ENCODE measurements at regions of chr12 and their contacts with region 1.

Region 1: DNA sequence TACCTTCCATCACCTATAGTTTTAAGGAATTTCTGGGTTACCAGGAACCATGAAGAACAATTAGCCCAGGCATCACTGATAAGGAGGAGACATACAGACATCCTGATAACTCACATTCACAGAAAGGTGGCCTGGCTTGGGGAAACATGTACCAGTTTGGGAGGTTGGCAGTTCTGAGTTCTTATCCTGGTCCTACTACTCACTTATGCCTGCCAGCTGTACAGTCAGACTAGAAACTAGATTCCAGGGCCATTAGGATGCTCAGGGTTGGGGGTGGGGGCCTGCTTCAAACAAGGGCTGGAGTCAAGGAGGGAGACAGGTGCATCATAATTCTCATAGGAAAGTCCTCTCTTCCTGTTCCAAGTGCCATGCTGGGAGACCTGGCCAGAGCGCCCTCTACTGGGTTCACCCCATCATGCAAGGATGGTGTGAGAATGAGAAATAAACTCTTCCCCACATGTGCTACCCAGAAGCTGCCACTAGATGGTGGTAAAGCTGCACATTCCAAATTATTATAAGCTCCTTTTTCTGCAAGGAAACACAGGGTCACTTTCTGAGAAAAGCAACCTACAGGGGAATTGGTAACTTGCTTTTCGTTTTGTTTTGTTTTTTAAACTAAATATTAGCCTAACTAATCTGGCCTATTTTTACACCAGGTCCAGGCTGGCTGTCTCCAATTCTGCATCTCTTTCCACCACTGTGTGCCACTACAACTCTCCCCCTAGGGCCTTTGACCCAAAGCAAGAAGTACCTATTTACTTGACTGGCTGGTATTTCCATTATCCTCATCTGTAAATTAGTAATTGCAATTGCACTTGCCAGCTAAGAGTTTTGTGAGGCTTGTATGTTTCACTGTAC is 14.5 kb downstream of the OAS2 start:
- DNase-seq: peak; percentile 78
- H3K4me3 Mint-ChIP-seq: no peak overlapping the region
- H3K27ac Mint-ChIP-seq: no peak overlapping the region
- H3K4me1 Mint-ChIP-seq: no peaks in the 10 kb centered on the region
- H3K27me3 Mint-ChIP-seq: no peaks in the 10 kb centered on the region
- CTCF ChIP-seq: peak; percentile 95

Region 2: GRCh38 chr12:112676526-112676925 is 316.2 kb before region 1 on chr12:
- CTCF ChIA-PET with region 1: no interaction called
- POLR2A ChIA-PET with region 1: no interaction called
- intact Hi-C with region 1: no loop called
- DNase-seq: no peak
- H3K4me3 Mint-ChIP-seq: no peak overlapping the region
- H3K27ac Mint-ChIP-seq: no peak overlapping the region
- H3K4me1 Mint-ChIP-seq: no peaks in the 10 kb centered on the region
- H3K27me3 Mint-ChIP-seq: peaks cover 86% of the 10 kb centered on the region
- CTCF ChIP-seq: no peak

Region 3: DNA sequence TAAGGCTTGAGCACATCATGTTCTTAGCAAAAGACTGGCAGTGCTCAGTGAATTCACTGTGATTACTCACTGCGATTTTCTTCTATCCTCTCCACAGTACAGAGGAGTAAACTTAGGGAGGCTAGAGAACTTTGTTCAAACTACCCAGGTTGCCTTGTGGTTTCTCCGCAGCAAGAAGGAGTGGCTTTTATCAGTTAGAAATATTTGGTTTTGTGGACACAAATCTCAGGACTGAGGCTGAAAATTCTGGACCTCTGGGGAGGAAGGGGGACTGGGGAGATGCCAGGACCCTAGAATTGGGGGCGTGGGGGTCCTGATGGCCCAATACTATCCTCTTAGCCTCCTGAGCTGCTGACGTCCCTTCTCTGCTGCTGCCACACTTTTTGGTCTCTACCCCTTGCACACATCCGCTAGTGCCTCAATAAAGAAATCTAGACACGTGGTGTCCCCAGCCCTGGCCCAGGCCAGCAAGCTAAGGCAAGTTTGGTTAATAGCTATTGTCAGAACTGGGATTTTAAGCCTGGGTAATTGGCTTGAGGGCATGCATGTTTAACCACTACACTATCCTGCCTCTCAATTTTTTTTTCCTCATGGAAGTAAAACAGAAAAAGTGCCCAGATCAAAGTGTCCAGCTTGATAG is 13.6 kb before region 1 on chr12:
- CTCF ChIA-PET with region 1: interaction called, 10 read pairs
- POLR2A ChIA-PET with region 1: interaction called, 3 read pairs
- intact Hi-C with region 1: no loop called
- DNase-seq: no peak
- H3K4me3 Mint-ChIP-seq: no peak overlapping the region
- H3K27ac Mint-ChIP-seq: no peak overlapping the region
- H3K4me1 Mint-ChIP-seq: no peaks in the 10 kb centered on the region
- H3K27me3 Mint-ChIP-seq: no peaks in the 10 kb centered on the region
- CTCF ChIP-seq: no peak

Region 4: GRCh38 chr12:113019041-113019440 is 26.3 kb after region 1 on chr12:
- CTCF ChIA-PET with region 1: interaction called, 35 read pairs
- POLR2A ChIA-PET with region 1: interaction called, 3 read pairs
- intact Hi-C with region 1: no loop called
- DNase-seq: peak; percentile 39
- H3K4me3 Mint-ChIP-seq: no peak overlapping the region
- H3K27ac Mint-ChIP-seq: no peak overlapping the region
- H3K4me1 Mint-ChIP-seq: peaks cover 17% of the 10 kb centered on the region
- H3K27me3 Mint-ChIP-seq: no peaks in the 10 kb centered on the region
- CTCF ChIP-seq: no peak

Region 5: GRCh38 chr12:113098446-113098896 is 105.7 kb after region 1 on chr12:
- CTCF ChIA-PET with region 1: interaction called, 13 read pairs
- POLR2A ChIA-PET with region 1: interaction called, 3 read pairs
- intact Hi-C with region 1: loop called (anchors 1 kb)
- DNase-seq: peak; percentile 97
- H3K4me3 Mint-ChIP-seq: peak overlapping the region; percentile 10
- H3K27ac Mint-ChIP-seq: no peak overlapping the region
- H3K4me1 Mint-ChIP-seq: no peaks in the 10 kb centered on the region
- H3K27me3 Mint-ChIP-seq: no peaks in the 10 kb centered on the region
- CTCF ChIP-seq: peak; percentile 90

Region 6: DNA sequence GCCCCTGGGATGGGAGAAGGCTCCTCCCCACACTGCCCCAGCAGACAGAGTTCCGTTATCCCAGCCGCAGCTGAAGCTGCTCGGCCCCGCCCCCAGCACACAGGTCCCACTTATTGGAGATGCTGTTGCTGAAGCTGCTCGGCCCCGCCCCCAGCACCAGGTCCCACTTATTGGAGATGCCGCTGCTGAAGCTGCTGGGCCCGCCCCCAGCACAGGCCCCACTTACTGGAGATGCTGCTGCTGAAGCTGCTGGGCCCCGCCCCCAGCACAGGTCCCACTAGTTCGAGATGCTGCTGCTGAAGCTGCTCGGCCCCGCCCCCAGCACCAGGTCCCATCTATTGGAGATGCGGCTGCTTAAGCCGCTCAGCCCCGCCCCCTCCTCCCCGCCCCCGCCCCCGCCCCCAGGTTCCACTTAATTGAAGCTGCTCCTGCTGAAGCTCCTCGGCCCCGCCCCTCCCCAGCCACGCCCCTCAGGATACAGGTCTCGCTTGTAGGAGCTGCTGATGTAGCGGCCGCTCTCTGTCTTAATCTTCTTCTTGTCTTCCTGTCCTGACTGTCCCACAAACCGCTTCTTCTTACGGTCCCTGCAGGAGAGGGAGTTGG is 168.7 kb after region 1 on chr12:
- CTCF ChIA-PET with region 1: interaction called, 17 read pairs
- POLR2A ChIA-PET with region 1: interaction called, 4 read pairs
- intact Hi-C with region 1: no loop called
- DNase-seq: peak; percentile 21
- H3K4me3 Mint-ChIP-seq: no peak overlapping the region
- H3K27ac Mint-ChIP-seq: no peak overlapping the region
- H3K4me1 Mint-ChIP-seq: peaks cover 11% of the 10 kb centered on the region
- H3K27me3 Mint-ChIP-seq: no peaks in the 10 kb centered on the region
- CTCF ChIP-seq: no peak